Activated naive CD4-positive, alpha-beta T cell treated with anti-CD3 and anti-CD28 coated beads, Interleukin-2, amount 10 ng/mL, durations not matched to agents 7 days and 5 days (primary cell): ENCODE measurements at regions of chr7 and their contacts with region 1.

Region 1: GRCh38 chr7:76302347-76303201 is at the start of gene HSPB1:
- DNase-seq: peak; percentile 68
- H3K4me3 Mint-ChIP-seq: peak within 1 kb of the TSS; percentile 85
- H3K27ac Mint-ChIP-seq: peak within 1 kb of the TSS; percentile 76
- H3K4me1 Mint-ChIP-seq: peaks cover 21% of the 10 kb centered on the region
- H3K27me3 Mint-ChIP-seq: peaks cover 59% of the 10 kb centered on the region

Region 2: GRCh38 chr7:76291343-76292212 is 11.0 kb before region 1 on chr7:
- CTCF ChIA-PET with region 1: interaction called, 26 read pairs
- DNase-seq: peak; percentile 90
- H3K4me3 Mint-ChIP-seq: no peak overlapping the region
- H3K27ac Mint-ChIP-seq: no peak overlapping the region
- H3K4me1 Mint-ChIP-seq: peaks cover 10% of the 10 kb centered on the region
- H3K27me3 Mint-ChIP-seq: peaks cover 29% of the 10 kb centered on the region